Heart left ventricle (tissue), 16 donors: ENCODE measurements at regions of chr13 and their contacts with region 1.

Region 1: GRCh38 chr13:40445557-40445990 is 220.9 kb downstream of the FOXO1 start:
- DNase-seq: peak; percentile 67 to 83 (median 75)
- ATAC-seq: peak; percentile 27 to 92 (median 74)
- H3K4me3 ChIP-seq: no peak overlapping the region
- H3K27ac ChIP-seq: peak overlapping the region in 6 of 12 donors; percentile 28 to 63 (median 52)
- H3K4me1 ChIP-seq: peaks cover 4 to 46% (median 32%) of the 10 kb centered on the region in 12 donors
- H3K27me3 ChIP-seq: no peaks in the 10 kb centered on the region
- CTCF ChIP-seq: no peak
- POLR2A ChIP-seq: no peak

Region 2: DNA sequence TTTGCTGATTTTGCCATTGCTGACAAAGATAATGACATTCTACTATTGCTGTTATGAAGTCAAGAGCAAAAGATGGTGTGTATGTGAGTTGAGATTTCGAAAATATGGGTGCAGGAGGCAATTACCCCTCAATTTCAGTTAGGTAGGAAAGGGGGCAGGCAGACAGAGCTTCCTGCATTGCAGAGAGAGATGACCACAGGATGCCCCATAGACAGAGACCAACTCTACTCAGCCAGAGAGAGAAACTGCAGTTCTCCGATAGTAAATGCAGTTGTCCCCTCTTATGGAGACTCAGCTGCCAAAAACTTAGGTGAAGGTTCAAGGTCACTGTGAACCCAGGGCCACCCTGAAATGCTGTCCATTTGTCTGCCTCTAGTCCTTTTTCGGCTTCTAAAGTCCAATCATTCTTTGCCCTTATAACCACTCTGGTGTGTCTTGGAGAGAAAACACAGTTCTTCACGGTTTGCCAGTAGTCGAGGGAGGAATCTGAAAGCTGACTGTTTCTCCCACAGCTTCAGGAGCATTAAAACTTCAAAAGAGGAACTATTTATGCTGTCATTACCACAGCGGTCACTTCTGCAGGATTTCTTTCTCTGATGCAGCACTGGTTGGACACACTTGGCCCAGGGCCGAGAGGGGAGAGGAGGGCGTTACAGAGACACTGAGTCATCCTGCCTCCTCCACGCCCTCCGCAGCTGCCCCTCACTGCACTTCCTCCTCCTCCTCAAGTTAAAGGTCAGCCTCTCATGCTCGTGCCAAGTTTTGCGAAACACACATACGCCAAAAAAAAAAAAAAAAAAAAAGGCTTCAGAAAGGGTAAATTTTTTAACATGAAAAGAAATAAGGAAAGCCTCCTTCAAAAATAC is 43.4 kb before region 1 on chr13:
- intact Hi-C with region 1: loop called in 2 of 10 experiments (anchors 5 kb)
- DNase-seq: peak; percentile 92 to 97 (median 97)
- ATAC-seq: peak; percentile 85 to 98 (median 98)
- H3K4me3 ChIP-seq: peak overlapping the region in 6 of 12 donors; percentile 11 to 25 (median 20)
- H3K27ac ChIP-seq: peak overlapping the region; percentile 11 to 76 (median 58)
- H3K4me1 ChIP-seq: peaks cover 4 to 40% (median 28%) of the 10 kb centered on the region in 12 donors
- H3K27me3 ChIP-seq: no peaks in the 10 kb centered on the region
- CTCF ChIP-seq: no peak
- POLR2A ChIP-seq: no peak

Region 3: GRCh38 chr13:40477623-40478608 is 32.3 kb after region 1 on chr13:
- intact Hi-C with region 1: loop called in 1 of 10 experiments (anchors 5 kb)
- DNase-seq: peak in 4 of 5 donors; percentile 41 to 68 (median 64)
- ATAC-seq: peak; percentile 40 to 82 (median 64)
- H3K4me3 ChIP-seq: peak overlapping the region in 1 of 12 donors; percentile 5
- H3K27ac ChIP-seq: peak overlapping the region in 11 of 12 donors; percentile 51 to 75 (median 66)
- H3K4me1 ChIP-seq: peaks cover 6 to 53% (median 35%) of the 10 kb centered on the region in 12 donors
- H3K27me3 ChIP-seq: no peaks in the 10 kb centered on the region
- CTCF ChIP-seq: no peak
- POLR2A ChIP-seq: no peak

Region 4: GRCh38 chr13:40503966-40504591 is 58.5 kb after region 1 on chr13:
- intact Hi-C with region 1: loop called in 1 of 10 experiments (anchors 10 kb)
- DNase-seq: no peak
- ATAC-seq: peak in 3 of 4 donors; percentile 48 to 73 (median 58)
- H3K4me3 ChIP-seq: no peak overlapping the region
- H3K27ac ChIP-seq: peak overlapping the region in 1 of 12 donors; percentile 1
- H3K4me1 ChIP-seq: peaks cover 0 to 30% (median 7%) of the 10 kb centered on the region in 12 donors
- H3K27me3 ChIP-seq: no peaks in the 10 kb centered on the region
- CTCF ChIP-seq: no peak
- POLR2A ChIP-seq: no peak

Region 5: GRCh38 chr13:40536443-40537113 is 91.0 kb after region 1 on chr13:
- intact Hi-C with region 1: loop called in 1 of 10 experiments (anchors 5 kb)
- DNase-seq: no peak
- ATAC-seq: peak in 3 of 4 donors; percentile 29 to 41 (median 39)
- H3K4me3 ChIP-seq: no peak overlapping the region
- H3K27ac ChIP-seq: no peak overlapping the region
- H3K4me1 ChIP-seq: peaks cover 0 to 19% (median 9%) of the 10 kb centered on the region in 12 donors
- H3K27me3 ChIP-seq: no peaks in the 10 kb centered on the region
- CTCF ChIP-seq: no peak
- POLR2A ChIP-seq: no peak

Region 6: GRCh38 chr13:40564342-40565001 is 118.9 kb after region 1 on chr13:
- intact Hi-C with region 1: loop called in 1 of 10 experiments (anchors 10 kb)
- DNase-seq: no peak
- ATAC-seq: peak; percentile 11 to 43 (median 18)
- H3K4me3 ChIP-seq: peak overlapping the region in 1 of 12 donors; percentile 13
- H3K27ac ChIP-seq: peak overlapping the region in 9 of 12 donors; percentile 4 to 59 (median 54)
- H3K4me1 ChIP-seq: peaks cover 9 to 87% (median 59%) of the 10 kb centered on the region in 12 donors
- H3K27me3 ChIP-seq: no peaks in the 10 kb centered on the region
- CTCF ChIP-seq: peak in 3 of 12 donors; percentile 18 to 28 (median 24)
- POLR2A ChIP-seq: no peak